CD4-positive, alpha-beta T cell (primary cell): ENCODE measurements at regions of chr5 and their contacts with region 1.

Region 1: GRCh38 chr5:77030097-77031071 is at the start of gene AGGF1:
- DNase-seq: peak; percentile 81 to 95 (median 89)
- ATAC-seq: peak; percentile 97
- H3K4me3 ChIP-seq: peak within 1 kb of the TSS; percentile 90
- H3K4me3 Mint-ChIP-seq: peak within 1 kb of the TSS; percentile 85
- H3K27ac ChIP-seq: peak within 1 kb of the TSS; percentile 70 to 82
- H3K27ac Mint-ChIP-seq: peak within 1 kb of the TSS; percentile 89
- H3K4me1 ChIP-seq: peaks cover 19% of the 10 kb centered on the region
- H3K4me1 Mint-ChIP-seq: peaks cover 52% of the 10 kb centered on the region
- H3K27me3 ChIP-seq: no peaks in the 10 kb centered on the region
- H3K27me3 Mint-ChIP-seq: peaks cover 3% of the 10 kb centered on the region
- CTCF ChIP-seq: no peak
- total RNA-seq, gene AGGF1: 15.5 to 15.7 TPM

Region 2: GRCh38 chr5:75336625-75337339 is 1693.6 kb before region 1 on chr5 and contains the start of gene HMGCR:
- CTCF ChIA-PET with region 1: no interaction called
- POLR2A ChIA-PET with region 1: interaction called, 3 read pairs
- intact Hi-C with region 1: loop called in 1 of 2 experiments (anchors 2 kb)
- DNase-seq: peak; percentile 91 to 99 (median 95)
- ATAC-seq: peak; percentile 90
- H3K4me3 ChIP-seq: peak within 1 kb of the TSS; percentile 82
- H3K4me3 Mint-ChIP-seq: no peak within 1 kb of the TSS
- H3K27ac ChIP-seq: peak within 1 kb of the TSS; percentile 64 to 88
- H3K27ac Mint-ChIP-seq: no peak within 1 kb of the TSS
- H3K4me1 ChIP-seq: peaks cover 5% of the 10 kb centered on the region
- H3K4me1 Mint-ChIP-seq: peaks cover 38% of the 10 kb centered on the region
- H3K27me3 ChIP-seq: no peaks in the 10 kb centered on the region
- H3K27me3 Mint-ChIP-seq: no peaks in the 10 kb centered on the region
- CTCF ChIP-seq: no peak
- total RNA-seq, gene HMGCR: 55.5 to 61.5 TPM

Region 3: DNA sequence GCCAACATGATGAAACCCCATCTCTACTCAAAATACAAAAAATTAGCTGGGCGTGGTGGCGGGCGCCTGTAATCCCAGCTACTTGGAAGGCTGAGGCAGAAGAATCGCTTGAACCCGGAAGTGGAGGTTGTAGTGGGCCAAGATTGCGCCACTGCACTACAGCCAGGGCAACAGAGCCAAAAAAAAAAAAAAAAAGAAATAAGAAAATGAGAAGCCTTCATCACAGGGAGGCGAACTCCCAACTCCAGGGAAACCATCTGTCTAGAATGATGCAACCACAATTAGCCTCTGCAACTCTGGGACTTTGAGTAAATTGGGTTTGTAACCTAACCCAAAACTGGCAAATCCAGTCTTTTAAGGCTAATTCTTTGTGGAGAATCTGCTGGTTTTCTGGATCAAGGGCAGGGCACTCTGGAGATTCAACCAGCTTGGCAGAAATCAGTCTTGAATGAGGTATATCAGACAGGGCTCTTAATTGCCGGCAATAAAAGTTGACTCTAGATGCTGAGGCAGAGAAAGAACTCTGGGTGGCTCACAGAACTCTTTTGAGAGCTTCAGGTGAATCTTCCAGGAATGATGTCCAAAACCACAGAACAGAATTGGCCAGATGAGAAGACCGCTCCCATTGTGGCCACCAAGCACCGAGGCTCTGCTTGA is 170.7 kb before region 1 on chr5:
- CTCF ChIA-PET with region 1: no interaction called
- POLR2A ChIA-PET with region 1: interaction called, 4 read pairs
- intact Hi-C with region 1: loop called in 1 of 2 experiments (anchors 5 kb)
- DNase-seq: no peak
- ATAC-seq: no peak
- H3K4me3 ChIP-seq: no peak overlapping the region
- H3K4me3 Mint-ChIP-seq: no peak overlapping the region
- H3K27ac ChIP-seq: no peak overlapping the region
- H3K27ac Mint-ChIP-seq: no peak overlapping the region
- H3K4me1 ChIP-seq: peaks cover 28% of the 10 kb centered on the region
- H3K4me1 Mint-ChIP-seq: peaks cover 22% of the 10 kb centered on the region
- H3K27me3 ChIP-seq: no peaks in the 10 kb centered on the region
- H3K27me3 Mint-ChIP-seq: no peaks in the 10 kb centered on the region
- CTCF ChIP-seq: no peak

Region 4: DNA sequence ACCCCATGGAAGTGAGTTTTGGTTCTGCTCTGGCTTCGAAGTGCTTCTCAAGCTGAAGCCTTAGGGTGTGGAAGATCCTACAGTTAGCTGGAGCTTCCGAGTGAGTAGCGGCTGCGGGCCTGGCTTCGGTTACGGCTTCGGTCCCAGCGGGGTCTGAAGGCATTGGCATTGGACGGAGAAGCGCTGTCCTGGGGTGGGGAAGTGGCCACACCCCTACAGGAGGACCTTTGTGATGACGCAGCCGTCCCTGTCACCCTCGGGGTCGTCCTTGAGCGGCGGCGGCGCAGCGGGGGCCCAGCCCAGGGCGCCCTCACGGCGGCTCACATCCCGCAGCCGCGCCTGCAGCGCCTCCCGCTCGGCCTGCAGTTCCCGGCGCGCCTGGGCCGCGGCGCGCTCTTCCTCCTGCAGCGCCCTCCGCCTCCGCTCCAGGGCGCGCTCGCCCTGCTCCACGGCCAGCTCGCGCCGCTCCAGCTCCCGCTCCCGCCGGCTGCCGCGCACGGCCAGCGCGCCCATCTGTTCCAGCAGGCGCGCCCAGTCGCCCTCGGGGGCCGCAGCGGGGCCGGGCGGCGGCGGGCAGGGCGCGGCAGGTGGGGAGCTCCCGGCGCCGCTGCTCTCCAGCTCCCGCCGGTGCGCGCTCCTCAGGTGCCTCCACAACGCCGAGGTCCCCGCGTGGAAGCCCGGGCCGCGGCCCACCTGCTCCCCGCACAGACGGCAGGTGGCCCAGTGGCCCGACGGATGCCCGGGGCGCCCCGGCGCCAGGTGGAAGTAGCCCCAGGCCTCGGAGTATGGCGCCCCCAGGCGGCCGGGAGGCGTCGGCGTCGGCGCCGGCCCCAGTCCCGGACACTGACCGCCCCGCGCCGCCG is 46.8 kb after region 1 on chr5:
- CTCF ChIA-PET with region 1: interaction called, 3 read pairs
- POLR2A ChIA-PET with region 1: interaction called, 12 read pairs
- intact Hi-C with region 1: no loop called
- DNase-seq: peak in 12 of 14 experiments; percentile 14 to 73 (median 42)
- ATAC-seq: peak; percentile 80
- H3K4me3 ChIP-seq: peak overlapping the region; percentile 19
- H3K4me3 Mint-ChIP-seq: peak overlapping the region; percentile 68
- H3K27ac ChIP-seq: no peak overlapping the region
- H3K27ac Mint-ChIP-seq: no peak overlapping the region
- H3K4me1 ChIP-seq: peaks cover 7% of the 10 kb centered on the region
- H3K4me1 Mint-ChIP-seq: peaks cover 7% of the 10 kb centered on the region
- H3K27me3 ChIP-seq: no peaks in the 10 kb centered on the region
- H3K27me3 Mint-ChIP-seq: no peaks in the 10 kb centered on the region
- CTCF ChIP-seq: peak; percentile 42

Region 5: GRCh38 chr5:77491783-77492652 is 461.6 kb after region 1 on chr5 and contains the start of gene WDR41:
- CTCF ChIA-PET with region 1: interaction called, 3 read pairs
- POLR2A ChIA-PET with region 1: interaction called, 7 read pairs
- intact Hi-C with region 1: loop called in 1 of 2 experiments (anchors 10 kb)
- DNase-seq: peak; percentile 66 to 94 (median 82)
- ATAC-seq: peak; percentile 92
- H3K4me3 ChIP-seq: peak within 1 kb of the TSS; percentile 95
- H3K4me3 Mint-ChIP-seq: peak within 1 kb of the TSS; percentile 96
- H3K27ac ChIP-seq: peak within 1 kb of the TSS; percentile 70 to 72
- H3K27ac Mint-ChIP-seq: peak within 1 kb of the TSS; percentile 69
- H3K4me1 ChIP-seq: peaks cover 11% of the 10 kb centered on the region
- H3K4me1 Mint-ChIP-seq: peaks cover 24% of the 10 kb centered on the region
- H3K27me3 ChIP-seq: no peaks in the 10 kb centered on the region
- H3K27me3 Mint-ChIP-seq: peaks cover 33% of the 10 kb centered on the region
- CTCF ChIP-seq: peak; percentile 91
- total RNA-seq, gene WDR41: 4.2 to 4.4 TPM

Region 6: DNA sequence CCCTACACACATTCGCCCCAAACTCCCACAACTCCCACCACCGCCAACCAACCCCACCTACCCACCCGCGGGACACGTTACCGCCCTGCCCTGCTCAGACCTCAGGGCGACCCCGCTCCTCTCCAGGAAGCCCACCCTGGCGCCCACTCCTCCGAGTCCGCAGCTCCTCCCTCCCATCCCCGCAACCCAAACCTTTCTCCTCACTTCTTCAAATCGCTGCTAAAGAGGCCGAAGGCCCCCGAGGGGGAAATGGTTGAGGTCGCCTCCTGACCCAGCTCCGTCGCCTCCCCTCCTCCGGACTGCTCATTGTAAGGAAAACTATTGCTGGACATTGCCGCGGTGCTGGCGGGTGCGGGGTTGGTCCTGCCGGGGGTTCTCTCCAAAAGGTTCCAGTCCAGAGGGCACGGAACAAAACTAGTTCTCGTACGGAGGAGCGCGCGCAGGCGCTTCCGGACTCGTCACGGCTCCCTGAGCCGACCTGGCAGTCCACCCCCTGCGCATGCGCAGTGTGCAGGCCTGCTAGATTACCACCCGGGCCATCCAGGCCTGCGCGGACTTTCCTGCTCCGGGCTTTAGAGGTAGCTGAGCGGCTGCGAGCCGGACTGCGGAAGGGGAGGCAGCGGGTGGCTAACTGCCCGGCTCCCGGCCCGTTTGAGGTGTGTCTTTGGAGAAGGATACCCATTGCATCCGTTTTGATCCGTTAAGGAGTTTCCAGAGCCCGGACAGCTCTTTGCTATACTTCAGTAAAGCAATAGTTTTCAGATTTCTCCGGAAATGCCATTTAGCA is 1264.1 kb after region 1 on chr5 and contains the start of gene AP3B1:
- CTCF ChIA-PET with region 1: no interaction called
- POLR2A ChIA-PET with region 1: interaction called, 3 read pairs
- intact Hi-C with region 1: loop called in 1 of 2 experiments (anchors 10 kb)
- DNase-seq: peak; percentile 92 to 99 (median 96)
- ATAC-seq: peak; percentile 90
- H3K4me3 ChIP-seq: peak within 1 kb of the TSS; percentile 96
- H3K4me3 Mint-ChIP-seq: peak within 1 kb of the TSS; percentile 96
- H3K27ac ChIP-seq: peak within 1 kb of the TSS; percentile 70 to 81
- H3K27ac Mint-ChIP-seq: peak within 1 kb of the TSS; percentile 94
- H3K4me1 ChIP-seq: peaks cover 19% of the 10 kb centered on the region
- H3K4me1 Mint-ChIP-seq: peaks cover 44% of the 10 kb centered on the region
- H3K27me3 ChIP-seq: no peaks in the 10 kb centered on the region
- H3K27me3 Mint-ChIP-seq: no peaks in the 10 kb centered on the region
- CTCF ChIP-seq: no peak
- total RNA-seq, gene AP3B1: 24.5 to 24.6 TPM

Region 7: GRCh38 chr5:78984439-78985115 is 1954.2 kb after region 1 on chr5:
- CTCF ChIA-PET with region 1: no interaction called
- POLR2A ChIA-PET with region 1: no interaction called
- intact Hi-C with region 1: loop called in 1 of 2 experiments (anchors 10 kb)
- DNase-seq: peak; percentile 49 to 90 (median 70)
- ATAC-seq: peak; percentile 76
- H3K4me3 ChIP-seq: peak overlapping the region; percentile 68
- H3K4me3 Mint-ChIP-seq: peak overlapping the region; percentile 97
- H3K27ac ChIP-seq: peak overlapping the region; percentile 51 to 77
- H3K27ac Mint-ChIP-seq: peak overlapping the region; percentile 98
- H3K4me1 ChIP-seq: peaks cover 14% of the 10 kb centered on the region
- H3K4me1 Mint-ChIP-seq: peaks cover 33% of the 10 kb centered on the region
- H3K27me3 ChIP-seq: no peaks in the 10 kb centered on the region
- H3K27me3 Mint-ChIP-seq: no peaks in the 10 kb centered on the region
- CTCF ChIP-seq: peak; percentile 9